ENCODE measurements at regions of chr9 and their contacts with region 1.

Region 1: DNA sequence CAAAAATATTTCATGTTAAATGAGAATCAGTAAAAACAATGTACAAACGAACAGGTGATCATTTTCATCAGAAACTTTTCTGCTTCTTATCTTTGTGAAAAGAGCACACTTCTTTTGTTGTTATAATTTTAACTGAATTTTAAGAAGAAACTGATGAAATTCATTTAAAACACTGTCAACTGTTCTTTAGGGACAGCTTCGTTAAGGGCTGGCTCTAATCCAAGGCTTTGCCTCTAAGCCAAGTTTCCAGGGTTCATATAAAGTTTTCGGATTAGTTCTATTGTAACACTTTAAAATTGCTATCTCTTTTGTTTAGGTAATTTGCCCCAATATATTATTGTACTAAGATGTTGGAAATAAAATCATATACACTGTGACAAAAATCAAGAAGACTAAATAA is 559.2 kb downstream of the TUSC1 start:
- DNase-seq: no peak
- ATAC-seq: no peak
- H3K4me3 ChIP-seq: no peak overlapping the region
- H3K27ac ChIP-seq: no peak overlapping the region
- H3K4me1 ChIP-seq: no peaks in the 10 kb centered on the region
- H3K27me3 ChIP-seq: no peaks in the 10 kb centered on the region
- CTCF ChIP-seq: no peak
- EP300 ChIP-seq: no peak
- POLR2A ChIP-seq: no peak
- RAD21 ChIP-seq: no peak

Region 2: GRCh38 chr9:23464275-23464674 is 1654.8 kb before region 1 on chr9:
- CTCF ChIA-PET with region 1: no interaction called
- POLR2A ChIA-PET with region 1: no interaction called
- RAD21 ChIA-PET with region 1: no interaction called
- SMC1A ChIA-PET with region 1: no interaction called
- in situ Hi-C with region 1: no loop called
- intact Hi-C with region 1: no loop called
- DNase-seq: no peak
- ATAC-seq: no peak
- H3K4me3 ChIP-seq: no peak overlapping the region
- H3K27ac ChIP-seq: no peak overlapping the region
- H3K4me1 ChIP-seq: no peaks in the 10 kb centered on the region
- H3K27me3 ChIP-seq: no peaks in the 10 kb centered on the region
- CTCF ChIP-seq: no peak
- EP300 ChIP-seq: no peak
- POLR2A ChIP-seq: no peak
- RAD21 ChIP-seq: no peak

Region 3: DNA sequence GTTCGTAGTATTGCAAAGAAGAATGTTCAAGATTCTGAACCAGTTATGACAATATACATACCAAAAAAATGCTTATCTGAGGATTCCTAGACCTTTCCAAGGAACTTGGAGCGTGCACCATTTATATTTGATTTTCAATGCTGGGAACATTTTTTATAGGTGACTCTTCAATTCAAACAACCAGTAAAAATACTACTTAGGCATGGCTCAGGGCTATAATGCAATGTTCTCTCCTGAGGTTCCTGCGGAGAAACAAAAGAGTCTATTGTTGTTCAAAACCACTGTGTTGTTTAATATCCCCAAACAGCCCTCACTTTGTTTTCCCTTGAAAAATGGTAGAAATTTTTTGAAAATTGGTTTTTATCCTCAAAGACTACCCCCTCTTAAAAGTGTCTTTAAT is 237.7 kb before region 1 on chr9:
- CTCF ChIA-PET with region 1: no interaction called
- POLR2A ChIA-PET with region 1: no interaction called
- RAD21 ChIA-PET with region 1: no interaction called
- SMC1A ChIA-PET with region 1: no interaction called
- in situ Hi-C with region 1: no loop called
- intact Hi-C with region 1: no loop called
- DNase-seq: no peak
- ATAC-seq: no peak
- H3K4me3 ChIP-seq: no peak overlapping the region
- H3K27ac ChIP-seq: no peak overlapping the region
- H3K4me1 ChIP-seq: no peaks in the 10 kb centered on the region
- H3K27me3 ChIP-seq: no peaks in the 10 kb centered on the region
- CTCF ChIP-seq: no peak
- EP300 ChIP-seq: no peak
- POLR2A ChIP-seq: no peak
- RAD21 ChIP-seq: no peak

Region 4: DNA sequence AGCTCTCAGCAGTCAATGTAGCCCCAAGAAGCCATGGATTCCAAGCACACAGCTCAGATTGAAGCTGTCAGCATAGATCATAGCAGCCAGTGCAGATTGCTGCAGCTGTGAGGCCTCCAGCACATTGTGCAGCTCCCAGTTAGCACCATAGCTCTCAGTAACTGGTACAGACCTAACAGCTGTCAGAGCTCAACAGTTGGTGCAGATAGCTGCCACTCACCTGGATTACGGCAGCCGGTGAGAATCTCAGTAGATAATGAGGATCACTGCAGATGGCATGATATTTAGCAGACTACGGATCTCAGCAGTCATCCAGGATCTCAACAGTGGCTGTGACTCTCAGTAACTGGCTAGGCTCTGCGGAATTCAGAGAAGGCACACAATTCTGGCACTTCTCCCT is 58.8 kb after region 1 on chr9:
- CTCF ChIA-PET with region 1: no interaction called
- POLR2A ChIA-PET with region 1: no interaction called
- RAD21 ChIA-PET with region 1: no interaction called
- SMC1A ChIA-PET with region 1: no interaction called
- in situ Hi-C with region 1: no loop called
- intact Hi-C with region 1: loop called (anchors 10 kb)
- DNase-seq: no peak
- ATAC-seq: no peak
- H3K4me3 ChIP-seq: no peak overlapping the region
- H3K27ac ChIP-seq: no peak overlapping the region
- H3K4me1 ChIP-seq: no peaks in the 10 kb centered on the region
- H3K27me3 ChIP-seq: no peaks in the 10 kb centered on the region
- CTCF ChIP-seq: no peak
- EP300 ChIP-seq: no peak
- POLR2A ChIP-seq: no peak
- RAD21 ChIP-seq: no peak

Region 5: DNA sequence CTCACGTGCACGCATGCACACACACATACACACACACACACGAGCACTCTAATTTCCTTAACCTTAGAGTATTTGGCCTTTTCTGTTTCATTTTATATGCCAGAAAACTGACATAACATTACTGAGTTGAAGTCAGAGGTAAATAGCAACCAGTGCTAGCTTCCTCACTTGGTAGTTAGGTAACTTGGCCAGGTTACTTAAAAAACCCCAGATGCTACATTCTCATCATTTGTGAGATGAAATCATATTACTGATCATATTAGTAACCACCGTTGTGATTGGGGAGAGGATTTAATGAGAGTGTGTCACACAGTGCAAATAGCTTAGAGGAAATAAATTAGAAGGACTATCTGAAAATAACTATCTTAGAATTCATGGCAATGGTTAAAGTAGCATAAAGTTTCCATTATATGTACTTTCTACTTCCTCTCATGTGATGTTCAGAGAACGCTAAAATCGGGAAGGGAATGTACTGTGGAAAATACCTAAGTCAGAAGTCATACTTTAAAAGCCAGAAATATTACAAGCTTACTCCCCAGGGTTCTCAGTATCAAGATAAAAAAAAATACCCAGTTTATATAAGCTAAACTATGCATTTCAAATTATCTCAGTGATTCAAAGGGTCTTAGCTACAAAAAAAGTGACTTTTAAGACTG is 438.7 kb after region 1 on chr9:
- CTCF ChIA-PET with region 1: no interaction called
- POLR2A ChIA-PET with region 1: no interaction called
- RAD21 ChIA-PET with region 1: no interaction called
- SMC1A ChIA-PET with region 1: no interaction called
- in situ Hi-C with region 1: no loop called
- intact Hi-C with region 1: no loop called
- DNase-seq: no peak
- ATAC-seq: peak; percentile 24
- H3K4me3 ChIP-seq: no peak overlapping the region
- H3K27ac ChIP-seq: no peak overlapping the region
- H3K4me1 ChIP-seq: no peaks in the 10 kb centered on the region
- H3K27me3 ChIP-seq: no peaks in the 10 kb centered on the region
- CTCF ChIP-seq: no peak
- EP300 ChIP-seq: no peak
- POLR2A ChIP-seq: no peak
- RAD21 ChIP-seq: no peak

Measured in GM12878 (cell line).